ENCODE measurements at regions of chr6 and their contacts with region 1.

Region 1: DNA sequence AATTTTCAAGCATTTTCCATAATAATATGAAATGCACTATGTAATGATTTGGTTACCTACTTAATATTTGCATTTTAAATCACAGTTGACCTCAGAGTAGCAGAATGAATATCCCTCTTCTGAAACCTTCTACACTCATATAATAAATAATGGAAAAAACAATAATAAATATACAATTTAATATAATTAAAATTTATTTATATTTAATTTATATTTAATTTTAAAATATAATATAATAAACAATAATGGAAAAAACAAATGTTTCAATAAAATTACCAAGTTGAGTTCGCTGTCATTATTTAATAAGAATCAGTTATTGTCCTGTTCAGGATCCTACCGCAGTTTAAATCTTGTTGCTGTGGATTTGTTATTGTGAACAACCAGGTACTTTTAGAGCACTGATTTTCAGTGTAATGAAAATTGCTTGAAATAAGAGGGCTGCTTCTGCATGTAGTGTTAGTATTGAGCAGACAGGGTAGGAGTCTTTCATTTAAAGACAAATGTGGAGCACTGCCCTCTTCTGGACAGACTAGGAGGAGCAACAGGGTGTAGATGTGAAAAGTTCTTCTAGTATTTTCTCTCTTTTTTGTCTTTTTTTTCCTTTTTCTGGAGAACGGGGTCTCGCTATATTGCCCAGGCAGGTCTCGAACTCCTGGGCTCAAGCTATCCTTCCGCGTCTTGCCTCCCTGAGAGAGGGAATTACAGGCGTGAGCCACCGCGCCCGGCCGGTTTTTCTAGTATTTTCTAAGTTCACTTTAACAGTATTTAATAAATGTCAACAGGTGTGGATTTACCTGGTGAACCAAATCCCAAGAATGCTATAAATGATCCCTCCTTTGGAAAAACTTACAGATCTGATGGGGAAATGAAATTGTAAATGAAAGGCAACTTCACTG is 13.6 kb downstream of the TRAPPC3L start:
- DNase-seq: peak; percentile 78
- ATAC-seq: peak; percentile 93
- H3K4me3 Mint-ChIP-seq: no peak overlapping the region
- H3K27ac Mint-ChIP-seq: no peak overlapping the region
- H3K4me1 Mint-ChIP-seq: no peaks in the 10 kb centered on the region
- H3K27me3 Mint-ChIP-seq: peaks cover 38% of the 10 kb centered on the region

Region 2: DNA sequence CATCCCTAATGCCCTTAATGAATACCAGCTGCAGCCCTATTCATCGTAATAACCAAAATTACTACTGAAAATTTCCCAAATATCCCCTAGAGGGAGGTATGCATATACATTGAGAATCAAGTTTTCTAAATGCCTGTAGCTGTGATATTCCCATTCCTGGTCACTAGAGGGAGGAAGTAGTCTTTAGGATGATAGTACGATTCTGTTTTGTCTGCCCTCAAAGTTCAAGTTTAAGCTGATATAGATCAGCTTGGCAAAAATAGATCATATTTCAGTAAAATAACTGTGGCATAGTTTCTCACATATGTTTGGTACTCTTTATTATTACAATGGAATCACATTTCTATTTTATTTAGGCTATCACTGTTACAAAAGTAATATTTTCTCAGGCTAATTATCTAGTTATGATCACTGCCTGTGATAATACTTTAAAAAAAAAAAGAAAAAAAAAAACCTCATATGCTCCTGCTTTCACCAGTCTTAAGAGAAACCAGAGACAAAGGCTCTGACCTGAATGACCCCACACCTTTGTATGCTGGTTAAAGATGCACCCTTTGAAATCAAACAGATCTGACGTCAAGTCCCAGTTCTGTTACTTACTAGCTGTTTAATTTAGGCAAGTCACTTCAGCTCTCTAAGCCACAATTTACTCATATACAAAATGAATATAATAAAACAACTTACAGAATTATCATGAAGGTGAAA is 263.2 kb before region 1 on chr6:
- CTCF ChIA-PET with region 1: interaction called, 28 read pairs
- POLR2A ChIA-PET with region 1: no interaction called
- DNase-seq: no peak
- ATAC-seq: peak; percentile 66
- H3K4me3 Mint-ChIP-seq: no peak overlapping the region
- H3K27ac Mint-ChIP-seq: no peak overlapping the region
- H3K4me1 Mint-ChIP-seq: peaks cover 3% of the 10 kb centered on the region
- H3K27me3 Mint-ChIP-seq: no peaks in the 10 kb centered on the region

Region 3: GRCh38 chr6:116444092-116444491 is 87.8 kb before region 1 on chr6:
- CTCF ChIA-PET with region 1: interaction called, 24 read pairs
- POLR2A ChIA-PET with region 1: no interaction called
- DNase-seq: no peak
- ATAC-seq: peak; percentile 73
- H3K4me3 Mint-ChIP-seq: no peak overlapping the region
- H3K27ac Mint-ChIP-seq: no peak overlapping the region
- H3K4me1 Mint-ChIP-seq: peaks cover 24% of the 10 kb centered on the region
- H3K27me3 Mint-ChIP-seq: peaks cover 34% of the 10 kb centered on the region